Left lung (tissue), 14 donors: ENCODE measurements at regions of chr4 and their contacts with region 1.

Region 1: GRCh38 chr4:1130316-1131186 is 17.2 kb upstream of the RNF212 start:
- DNase-seq: peak; percentile 63 to 83 (median 78)
- ATAC-seq: peak; percentile 100
- H3K4me3 ChIP-seq: no peak overlapping the region
- H3K27ac ChIP-seq: no peak overlapping the region
- H3K4me1 ChIP-seq: no peaks in the 10 kb centered on the region
- H3K27me3 ChIP-seq: no peaks in the 10 kb centered on the region
- CTCF ChIP-seq: peak; percentile 99

Region 2: GRCh38 chr4:907691-908437 is 222.7 kb before region 1 on chr4:
- intact Hi-C with region 1: no loop called
- DNase-seq: peak in 1 of 4 donors; percentile 71
- ATAC-seq: no peak
- H3K4me3 ChIP-seq: no peak overlapping the region
- H3K27ac ChIP-seq: peak overlapping the region in 1 of 2 donors; percentile 51
- H3K4me1 ChIP-seq: peaks cover 0 to 15% of the 10 kb centered on the region in 2 donors
- H3K27me3 ChIP-seq: no peaks in the 10 kb centered on the region
- CTCF ChIP-seq: no peak

Region 3: GRCh38 chr4:1260418-1261106 is 130.0 kb after region 1 on chr4:
- intact Hi-C with region 1: loop called in 1 of 2 experiments (anchors 10 kb)
- DNase-seq: peak in 1 of 4 donors; percentile 34
- ATAC-seq: no peak
- H3K4me3 ChIP-seq: no peak overlapping the region
- H3K27ac ChIP-seq: no peak overlapping the region
- H3K4me1 ChIP-seq: no peaks in the 10 kb centered on the region
- H3K27me3 ChIP-seq: no peaks in the 10 kb centered on the region
- CTCF ChIP-seq: no peak

Region 4: DNA sequence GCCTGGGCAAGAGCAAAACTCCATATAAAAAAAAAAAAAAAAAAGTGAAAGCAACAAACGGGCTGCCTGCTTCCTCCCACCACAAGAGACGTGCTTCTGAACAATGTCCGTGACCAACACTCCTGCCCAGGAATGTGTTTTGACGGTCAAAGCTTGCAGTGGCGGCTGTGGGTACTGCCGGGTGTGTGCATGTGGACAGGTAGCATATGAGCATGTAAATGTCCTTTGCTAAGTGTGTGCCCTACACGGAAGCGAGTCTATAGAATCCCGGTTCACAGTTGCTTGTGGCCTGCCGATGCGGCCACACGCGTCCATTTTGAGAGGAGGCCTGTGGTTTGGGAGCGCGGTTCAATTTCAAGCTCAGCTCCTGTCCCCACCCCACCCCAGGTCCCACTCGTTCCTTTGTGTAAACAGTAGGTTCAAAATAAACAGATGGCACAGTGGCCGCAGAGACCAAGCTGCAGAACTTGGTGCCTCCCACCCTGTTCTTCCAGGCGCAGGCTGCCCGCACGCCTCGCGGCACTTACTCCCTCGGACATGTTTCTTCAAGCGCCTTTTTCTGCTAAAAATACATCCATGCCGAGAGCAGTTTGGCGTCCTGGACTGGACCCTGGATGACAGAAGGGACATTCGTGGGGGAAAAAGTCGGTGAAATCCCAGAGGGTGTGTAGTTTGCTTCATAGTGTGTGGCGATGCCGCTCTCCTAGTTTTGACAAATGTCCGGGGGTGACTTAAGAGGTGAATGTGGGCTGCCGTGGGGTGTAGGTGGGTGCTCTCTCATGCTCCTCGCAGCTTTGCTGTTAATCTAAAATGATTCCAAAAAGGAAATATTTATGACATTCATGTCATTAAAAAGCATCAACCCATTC is 287.2 kb after region 1 on chr4:
- intact Hi-C with region 1: no loop called
- DNase-seq: peak in 2 of 4 donors; percentile 9 to 43
- ATAC-seq: no peak
- H3K4me3 ChIP-seq: no peak overlapping the region
- H3K27ac ChIP-seq: no peak overlapping the region
- H3K4me1 ChIP-seq: no peaks in the 10 kb centered on the region
- H3K27me3 ChIP-seq: peaks cover 28 to 97% of the 10 kb centered on the region in 2 donors
- CTCF ChIP-seq: no peak

Region 5: GRCh38 chr4:1727117-1728031 is 596.8 kb after region 1 on chr4:
- intact Hi-C with region 1: no loop called
- DNase-seq: peak in 2 of 4 donors; percentile 87 to 94
- ATAC-seq: peak; percentile 42
- H3K4me3 ChIP-seq: peak overlapping the region in 1 of 2 donors; percentile 31
- H3K27ac ChIP-seq: peak overlapping the region; percentile 63 to 89
- H3K4me1 ChIP-seq: peaks cover 4 to 80% of the 10 kb centered on the region in 2 donors
- H3K27me3 ChIP-seq: no peaks in the 10 kb centered on the region
- CTCF ChIP-seq: no peak